ENCODE measurements at regions of chrX and their contacts with region 1.

Region 1: DNA sequence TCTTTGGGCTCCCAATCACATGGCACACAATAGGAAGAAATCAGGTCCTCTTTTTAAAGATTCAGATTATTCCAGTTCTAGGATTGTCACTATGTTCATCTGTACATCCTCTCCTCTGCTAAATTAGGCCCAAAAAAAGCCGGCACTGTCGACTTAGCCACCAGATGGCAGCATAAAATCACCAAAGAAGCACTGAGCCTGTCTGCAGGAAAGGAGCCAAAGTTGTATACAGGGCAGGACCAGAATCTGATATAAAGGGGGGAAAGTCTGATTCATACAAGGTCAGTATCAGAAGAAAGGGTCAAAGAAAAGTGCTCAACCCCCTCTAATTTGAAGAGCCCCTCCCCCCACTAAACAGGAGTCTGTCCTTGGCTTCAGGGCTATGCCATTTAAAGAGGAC is 292.5 kb downstream of the CHIC1 start:
- DNase-seq: peak; percentile 58
- H3K4me3 Mint-ChIP-seq: no peak overlapping the region
- H3K27ac Mint-ChIP-seq: no peak overlapping the region
- H3K4me1 Mint-ChIP-seq: no peaks in the 10 kb centered on the region
- H3K27me3 Mint-ChIP-seq: no peaks in the 10 kb centered on the region
- CTCF ChIP-seq: peak; percentile 59

Region 2: GRCh38 chrX:72712094-72712755 is 1143.3 kb before region 1 on chrX:
- CTCF ChIA-PET with region 1: no interaction called
- intact Hi-C with region 1: no loop called
- DNase-seq: no peak
- H3K4me3 Mint-ChIP-seq: peak overlapping the region; percentile 91
- H3K27ac Mint-ChIP-seq: no peak overlapping the region
- H3K4me1 Mint-ChIP-seq: peaks cover 15% of the 10 kb centered on the region
- H3K27me3 Mint-ChIP-seq: no peaks in the 10 kb centered on the region
- CTCF ChIP-seq: no peak

Region 3: GRCh38 chrX:73799888-73800287 is 55.7 kb before region 1 on chrX:
- CTCF ChIA-PET with region 1: no interaction called
- intact Hi-C with region 1: no loop called
- DNase-seq: no peak
- H3K4me3 Mint-ChIP-seq: no peak overlapping the region
- H3K27ac Mint-ChIP-seq: no peak overlapping the region
- H3K4me1 Mint-ChIP-seq: no peaks in the 10 kb centered on the region
- H3K27me3 Mint-ChIP-seq: no peaks in the 10 kb centered on the region
- CTCF ChIP-seq: no peak

Region 4: DNA sequence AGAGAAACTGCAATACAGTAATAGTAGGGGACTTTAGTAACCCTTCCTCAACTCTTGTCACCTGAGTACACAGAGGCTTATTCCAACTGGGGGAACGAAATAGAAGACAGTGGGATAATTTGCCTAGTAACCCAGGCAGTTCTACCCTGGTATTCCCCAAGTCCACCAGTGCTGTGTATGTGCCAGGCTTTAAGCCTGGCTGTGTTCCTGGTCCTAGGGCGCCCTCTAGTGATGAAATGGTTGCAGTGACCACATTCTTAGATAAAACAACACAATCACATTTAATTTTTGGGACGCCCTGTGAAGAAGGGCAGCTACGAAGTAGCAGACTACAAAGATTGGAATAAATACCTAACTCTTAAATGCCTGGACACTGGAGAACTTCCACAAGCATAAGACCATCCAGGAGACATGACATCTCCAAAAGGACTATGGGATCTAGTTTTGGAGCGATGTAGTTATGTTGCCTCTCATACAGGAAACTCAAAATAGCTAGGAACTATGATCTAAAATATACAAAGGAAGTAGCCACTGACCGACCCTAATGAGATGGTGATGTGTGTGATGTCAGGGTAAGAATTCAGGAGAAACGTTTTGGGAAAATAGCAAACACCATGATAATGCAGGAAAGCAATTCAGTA is 160.0 kb after region 1 on chrX:
- CTCF ChIA-PET with region 1: no interaction called
- intact Hi-C with region 1: loop called (anchors 1 kb)
- DNase-seq: peak; percentile 59
- H3K4me3 Mint-ChIP-seq: no peak overlapping the region
- H3K27ac Mint-ChIP-seq: no peak overlapping the region
- H3K4me1 Mint-ChIP-seq: peaks cover 11% of the 10 kb centered on the region
- H3K27me3 Mint-ChIP-seq: no peaks in the 10 kb centered on the region
- CTCF ChIP-seq: peak; percentile 69

Region 5: DNA sequence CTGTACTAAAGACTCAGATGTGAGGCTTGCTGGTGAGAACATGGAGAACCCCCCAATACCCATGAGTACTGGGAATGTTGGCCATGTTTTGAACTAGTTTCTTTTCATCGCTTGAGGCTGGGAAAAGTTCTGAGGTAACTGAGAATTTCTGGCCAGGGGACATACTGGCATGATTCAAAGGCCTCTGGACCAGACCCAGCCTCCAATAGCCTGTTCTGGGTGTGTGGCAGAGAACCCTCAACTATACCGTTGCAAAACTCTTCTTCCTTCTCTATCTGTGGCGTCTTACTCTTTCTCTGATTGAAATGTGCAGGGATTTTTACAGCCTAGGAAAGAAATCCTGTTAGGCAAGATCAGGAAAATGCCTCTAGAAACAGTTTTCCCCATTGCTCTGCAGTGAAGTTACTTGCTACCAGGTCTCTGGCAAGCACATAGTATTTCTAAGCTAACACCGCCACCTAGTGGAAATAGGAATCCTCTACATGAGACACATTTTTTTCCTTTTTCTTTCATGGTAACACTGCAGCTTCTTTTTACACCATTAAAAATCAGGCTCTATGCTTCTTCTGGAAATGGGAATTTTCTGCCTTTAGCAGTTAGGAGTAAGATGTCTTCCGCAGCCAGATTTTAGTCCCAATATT is 277.7 kb after region 1 on chrX:
- CTCF ChIA-PET with region 1: interaction called, 3 read pairs
- intact Hi-C with region 1: loop called (anchors 1 kb)
- DNase-seq: peak; percentile 30
- H3K4me3 Mint-ChIP-seq: no peak overlapping the region
- H3K27ac Mint-ChIP-seq: no peak overlapping the region
- H3K4me1 Mint-ChIP-seq: no peaks in the 10 kb centered on the region
- H3K27me3 Mint-ChIP-seq: no peaks in the 10 kb centered on the region
- CTCF ChIP-seq: peak; percentile 51

Region 6: DNA sequence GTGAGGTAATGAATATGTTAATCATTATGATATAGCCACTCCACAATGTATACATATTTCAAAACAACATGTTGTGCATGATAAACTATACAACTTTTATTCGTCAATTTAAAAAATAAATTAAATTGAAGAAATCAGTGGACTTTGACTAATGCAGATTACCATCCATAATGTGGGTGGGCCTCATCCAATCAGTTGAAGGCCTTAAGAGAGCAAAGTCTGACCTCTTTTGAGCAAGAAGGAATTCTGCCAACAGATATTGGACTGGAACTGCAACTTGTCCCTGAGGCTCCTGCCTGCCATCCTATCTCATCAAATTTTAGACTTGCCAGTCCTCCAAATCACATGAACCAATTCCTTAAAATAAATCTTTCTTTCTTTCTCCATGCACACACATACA is 508.4 kb after region 1 on chrX:
- CTCF ChIA-PET with region 1: no interaction called
- intact Hi-C with region 1: loop called (anchors 5 kb)
- DNase-seq: no peak
- H3K4me3 Mint-ChIP-seq: no peak overlapping the region
- H3K27ac Mint-ChIP-seq: no peak overlapping the region
- H3K4me1 Mint-ChIP-seq: no peaks in the 10 kb centered on the region
- H3K27me3 Mint-ChIP-seq: no peaks in the 10 kb centered on the region
- CTCF ChIP-seq: no peak

Measured in Calu3 (cell line).